T-cell (primary cell): ENCODE measurements at regions of chr6 and their contacts with region 1.

Region 1: DNA sequence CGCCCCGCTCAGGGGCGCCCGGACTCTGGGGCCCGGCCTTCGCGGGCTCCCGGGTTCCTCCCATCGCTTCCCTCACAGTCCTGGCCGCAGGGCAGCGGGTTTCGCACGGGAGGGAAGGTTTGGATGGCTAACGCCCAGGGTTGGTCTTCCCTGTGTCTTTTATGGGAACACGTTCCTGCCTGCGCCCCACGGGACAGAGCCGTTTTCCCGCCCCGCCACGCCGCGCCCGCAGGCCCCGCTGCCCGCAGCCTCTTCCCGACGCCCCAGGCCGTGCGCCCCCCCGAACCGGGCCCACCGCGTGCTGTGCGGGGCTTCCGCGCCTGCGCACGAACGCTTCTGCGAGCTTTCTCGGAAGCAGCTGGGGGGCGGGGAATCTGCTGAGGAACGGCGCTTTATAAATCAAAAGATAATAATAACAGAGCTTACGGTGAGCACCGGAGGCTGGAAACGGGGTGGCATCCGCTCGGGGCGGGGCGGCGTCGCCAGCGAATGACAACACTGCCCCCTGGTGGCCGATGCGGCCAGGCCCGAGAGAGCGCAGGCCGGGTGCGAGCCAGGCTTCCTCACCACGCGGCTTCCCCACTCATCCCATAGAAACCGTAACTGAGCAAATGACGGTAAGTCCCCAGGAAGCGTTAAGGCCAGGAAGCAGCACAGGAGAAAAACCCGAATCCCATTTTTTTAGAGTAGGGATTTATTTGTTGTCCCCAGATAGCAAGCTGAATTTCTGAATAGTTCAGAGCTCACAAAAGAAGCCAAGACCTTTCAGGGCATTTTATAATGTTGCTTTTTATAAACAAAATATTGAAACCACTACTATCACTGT is 116.4 kb downstream of the MYLK4 start:
- DNase-seq: peak; percentile 47 to 89 (median 77)
- ATAC-seq: peak; percentile 93 to 98 (median 94)
- H3K4me3 ChIP-seq: peak overlapping the region; percentile 15 to 39
- H3K4me3 Mint-ChIP-seq: peak overlapping the region; percentile 60 to 76 (median 68)
- H3K27ac ChIP-seq: no peak overlapping the region
- H3K27ac Mint-ChIP-seq: no peak overlapping the region
- H3K4me1 ChIP-seq: peaks cover 0 to 9% of the 10 kb centered on the region in 2 experiments
- H3K4me1 Mint-ChIP-seq: peaks cover 4 to 6% (median 5%) of the 10 kb centered on the region in 3 donors
- H3K27me3 ChIP-seq: peaks cover 0 to 49% of the 10 kb centered on the region in 2 experiments
- H3K27me3 Mint-ChIP-seq: peaks cover 17 to 32% of the 10 kb centered on the region in 2 donors

Region 2: GRCh38 chr6:1607516-1608221 is 1026.7 kb before region 1 on chr6:
- CTCF ChIA-PET with region 1: interaction called, 7 to 10 read pairs
- POLR2A ChIA-PET with region 1: no interaction called
- DNase-seq: peak in 1 of 35 experiments; percentile 26
- ATAC-seq: no peak
- H3K4me3 ChIP-seq: peak overlapping the region in 1 of 2 donors; percentile 17
- H3K4me3 Mint-ChIP-seq: peak overlapping the region; percentile 35 to 70 (median 47)
- H3K27ac ChIP-seq: no peak overlapping the region
- H3K27ac Mint-ChIP-seq: peak overlapping the region in 1 of 2 donors; percentile 2
- H3K4me1 ChIP-seq: peaks cover 17 to 64% of the 10 kb centered on the region in 2 experiments
- H3K4me1 Mint-ChIP-seq: peaks cover 45 to 50% (median 46%) of the 10 kb centered on the region in 3 donors
- H3K27me3 ChIP-seq: peaks cover 6 to 76% of the 10 kb centered on the region in 2 experiments
- H3K27me3 Mint-ChIP-seq: peaks cover 61 to 65% of the 10 kb centered on the region in 2 donors

Region 3: GRCh38 chr6:2209226-2209809 is 425.0 kb before region 1 on chr6:
- CTCF ChIA-PET with region 1: interaction called, 3 to 12 read pairs
- POLR2A ChIA-PET with region 1: no interaction called
- DNase-seq: peak in 15 of 35 experiments; percentile 2 to 41 (median 10)
- ATAC-seq: peak in 2 of 4 experiments; percentile 42
- H3K4me3 ChIP-seq: no peak overlapping the region
- H3K4me3 Mint-ChIP-seq: no peak overlapping the region
- H3K27ac ChIP-seq: no peak overlapping the region
- H3K27ac Mint-ChIP-seq: no peak overlapping the region
- H3K4me1 ChIP-seq: no peaks in the 10 kb centered on the region
- H3K4me1 Mint-ChIP-seq: peaks cover 0 to 4% (median 0%) of the 10 kb centered on the region in 3 donors
- H3K27me3 ChIP-seq: no peaks in the 10 kb centered on the region
- H3K27me3 Mint-ChIP-seq: no peaks in the 10 kb centered on the region

Region 4: DNA sequence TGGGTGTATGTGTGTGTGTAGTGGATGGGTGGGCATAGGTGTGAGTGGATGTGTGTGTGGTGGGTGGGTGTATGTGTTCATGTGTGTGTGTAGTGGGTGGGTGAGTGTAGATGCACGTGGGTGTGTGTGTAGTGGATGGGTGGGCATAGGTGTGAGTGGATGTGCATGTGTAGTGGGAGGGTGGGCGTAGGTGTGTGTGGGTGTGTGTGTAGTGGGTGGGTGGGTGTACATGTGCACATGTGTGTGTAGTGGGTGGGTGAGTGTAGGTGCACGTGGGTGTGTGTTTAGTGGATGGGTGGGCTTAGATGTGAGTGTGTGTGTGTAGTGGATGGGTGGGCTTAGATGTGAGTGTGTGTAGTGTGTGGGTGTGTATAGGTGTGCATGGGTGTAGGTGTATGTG is 12.0 kb after region 1 on chr6:
- CTCF ChIA-PET with region 1: interaction called in 1 of 2 experiments, 10 read pairs
- POLR2A ChIA-PET with region 1: no interaction called
- DNase-seq: no peak
- ATAC-seq: no peak
- H3K4me3 ChIP-seq: no peak overlapping the region
- H3K4me3 Mint-ChIP-seq: no peak overlapping the region
- H3K27ac ChIP-seq: no peak overlapping the region
- H3K27ac Mint-ChIP-seq: no peak overlapping the region
- H3K4me1 ChIP-seq: no peaks in the 10 kb centered on the region
- H3K4me1 Mint-ChIP-seq: no peaks in the 10 kb centered on the region
- H3K27me3 ChIP-seq: peaks cover 0 to 27% of the 10 kb centered on the region in 2 experiments
- H3K27me3 Mint-ChIP-seq: peaks cover 27 to 55% of the 10 kb centered on the region in 2 donors